RWPE1 (cell line): ENCODE measurements at regions of chr7 and their contacts with region 1.

Region 1: DNA sequence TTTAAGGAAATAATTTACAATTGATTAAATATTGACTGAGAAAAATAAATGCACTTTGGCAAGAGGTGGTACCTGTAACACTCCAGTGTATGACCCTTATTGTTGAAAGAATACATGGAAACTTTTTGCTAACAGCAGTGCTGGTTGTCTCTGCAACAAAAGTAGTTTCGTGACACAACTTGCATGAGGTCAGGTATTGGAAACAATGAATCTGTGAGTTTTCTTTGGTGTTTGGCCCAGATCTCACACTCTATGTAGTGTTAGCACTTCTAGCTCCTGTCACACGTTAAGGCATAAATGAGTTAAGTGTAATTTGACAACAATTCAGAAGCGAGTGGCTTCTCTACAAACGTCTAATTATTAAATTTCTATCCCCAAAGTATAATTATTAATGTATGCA is 137.7 kb upstream of the MDFIC start:
- DNase-seq: no peak
- H3K27ac ChIP-seq: no peak overlapping the region
- CTCF ChIP-seq: no peak

Region 2: GRCh38 chr7:114426382-114427223 is 357.6 kb before region 1 on chr7:
- CTCF ChIA-PET with region 1: interaction called, 11 read pairs
- POLR2A ChIA-PET with region 1: no interaction called
- DNase-seq: no peak
- H3K27ac ChIP-seq: no peak overlapping the region
- CTCF ChIP-seq: peak; percentile 18; the same call in 1 of the 2 replicates